ENCODE measurements at regions of chr6 and their contacts with region 1.

Region 1: DNA sequence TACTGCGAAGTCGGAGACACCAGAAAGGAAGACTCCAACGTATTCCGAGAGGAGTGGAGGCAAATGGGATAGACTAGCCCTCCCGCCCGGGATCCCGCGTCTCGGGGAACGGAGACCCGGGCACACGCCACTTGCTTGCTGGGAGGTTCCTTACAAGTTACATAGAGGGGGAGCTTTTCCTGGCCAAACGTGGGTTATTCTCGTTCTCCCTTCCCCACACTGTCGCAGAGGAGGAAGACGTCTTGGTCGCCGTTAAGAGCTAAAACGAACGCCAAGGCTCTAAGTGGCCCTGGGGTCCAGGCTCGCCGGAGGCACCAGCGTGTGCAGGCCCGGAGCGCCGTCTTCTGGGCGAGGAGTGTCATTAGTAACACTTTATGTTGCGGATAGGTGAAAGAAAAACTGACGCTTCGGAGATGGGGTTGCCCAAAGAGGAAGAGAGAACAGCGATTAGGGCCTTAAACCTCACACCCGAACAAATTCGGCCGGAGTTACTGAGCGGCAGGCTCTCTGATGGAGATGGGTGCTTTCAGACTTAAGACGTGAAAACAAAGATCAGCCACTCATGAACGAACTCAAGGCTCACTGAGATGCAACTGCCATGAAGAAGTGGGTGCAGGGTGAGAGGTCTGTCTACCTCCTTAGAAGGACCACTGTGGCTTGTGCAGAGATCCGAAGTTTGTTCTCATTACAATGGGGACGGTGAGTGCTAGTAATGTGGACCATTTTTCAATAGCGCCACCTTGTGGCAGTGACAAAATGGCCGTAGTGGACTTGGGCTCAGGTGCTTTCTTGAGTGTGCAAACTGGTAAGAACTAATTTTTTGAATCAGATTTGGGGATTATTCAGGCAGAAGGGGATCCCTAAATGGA is 11.7 kb upstream of the ZNF311 start:
- DNase-seq: peak; percentile 95
- H3K4me3 Mint-ChIP-seq: peak overlapping the region; percentile 89
- H3K27ac Mint-ChIP-seq: peak overlapping the region; percentile 82
- H3K4me1 Mint-ChIP-seq: peaks cover 12% of the 10 kb centered on the region
- H3K27me3 Mint-ChIP-seq: peaks cover 26% of the 10 kb centered on the region

Region 2: GRCh38 chr6:28683944-28684538 is 332.8 kb before region 1 on chr6:
- intact Hi-C with region 1: loop called (anchors 1 kb)
- DNase-seq: peak; percentile 64
- H3K4me3 Mint-ChIP-seq: no peak overlapping the region
- H3K27ac Mint-ChIP-seq: no peak overlapping the region
- H3K4me1 Mint-ChIP-seq: peaks cover 15% of the 10 kb centered on the region
- H3K27me3 Mint-ChIP-seq: peaks cover 70% of the 10 kb centered on the region

Region 3: GRCh38 chr6:28863604-28864320 is 153.0 kb before region 1 on chr6:
- intact Hi-C with region 1: loop called (anchors 10 kb)
- DNase-seq: peak; percentile 96
- H3K4me3 Mint-ChIP-seq: peak overlapping the region; percentile 95
- H3K27ac Mint-ChIP-seq: peak overlapping the region; percentile 83
- H3K4me1 Mint-ChIP-seq: peaks cover 33% of the 10 kb centered on the region
- H3K27me3 Mint-ChIP-seq: peaks cover 18% of the 10 kb centered on the region

Region 4: GRCh38 chr6:28923318-28924102 is 93.3 kb before region 1 on chr6 and contains the start of gene TRIM27:
- intact Hi-C with region 1: loop called (anchors 2 kb)
- DNase-seq: peak; percentile 96
- H3K4me3 Mint-ChIP-seq: peak within 1 kb of the TSS; percentile 85
- H3K27ac Mint-ChIP-seq: peak within 1 kb of the TSS; percentile 93
- H3K4me1 Mint-ChIP-seq: peaks cover 27% of the 10 kb centered on the region
- H3K27me3 Mint-ChIP-seq: no peaks in the 10 kb centered on the region
- total RNA-seq, gene TRIM27: 64.8 and 67.3 TPM in 2 replicates

Region 5: GRCh38 chr6:28974505-28974904 is 42.3 kb before region 1 on chr6:
- intact Hi-C with region 1: no loop called
- DNase-seq: no peak
- H3K4me3 Mint-ChIP-seq: no peak overlapping the region
- H3K27ac Mint-ChIP-seq: no peak overlapping the region
- H3K4me1 Mint-ChIP-seq: peaks cover 20% of the 10 kb centered on the region
- H3K27me3 Mint-ChIP-seq: peaks cover 27% of the 10 kb centered on the region

Region 6: GRCh38 chr6:29589423-29590048 is 572.7 kb after region 1 on chr6:
- intact Hi-C with region 1: loop called (anchors 1 kb)
- DNase-seq: peak; percentile 86
- H3K4me3 Mint-ChIP-seq: no peak overlapping the region
- H3K27ac Mint-ChIP-seq: no peak overlapping the region
- H3K4me1 Mint-ChIP-seq: no peaks in the 10 kb centered on the region
- H3K27me3 Mint-ChIP-seq: peaks cover 43% of the 10 kb centered on the region

Measured in activated CD4-positive, alpha-beta T cell treated with anti-CD3 and anti-CD28 coated beads, Interleukin-2, amount 10 ng/mL, durations not matched to agents 24 days and 14 days (primary cell).